ENCODE measurements at regions of chr18 and their contacts with region 1.

Region 1: GRCh38 chr18:36419905-36420531 is 122.5 kb downstream of the FHOD3 start:
- DNase-seq: no peak
- H3K4me3 ChIP-seq: no peak overlapping the region
- H3K27ac ChIP-seq: peak overlapping the region in 1 of 2 donors; percentile 3
- H3K4me1 ChIP-seq: no peaks in the 10 kb centered on the region
- H3K27me3 ChIP-seq: no peaks in the 10 kb centered on the region
- CTCF ChIP-seq: no peak
- POLR2A ChIP-seq: no peak

Region 2: GRCh38 chr18:34483198-34483597 is 1936.8 kb before region 1 on chr18:
- intact Hi-C with region 1: no loop called
- DNase-seq: no peak
- H3K4me3 ChIP-seq: no peak overlapping the region
- H3K27ac ChIP-seq: no peak overlapping the region
- H3K4me1 ChIP-seq: no peaks in the 10 kb centered on the region
- H3K27me3 ChIP-seq: no peaks in the 10 kb centered on the region
- CTCF ChIP-seq: no peak
- POLR2A ChIP-seq: no peak

Region 3: GRCh38 chr18:35174093-35174731 is 1245.8 kb before region 1 on chr18:
- intact Hi-C with region 1: loop called (anchors 10 kb)
- DNase-seq: no peak
- H3K4me3 ChIP-seq: no peak overlapping the region
- H3K27ac ChIP-seq: no peak overlapping the region
- H3K4me1 ChIP-seq: peaks cover 0 to 3% of the 10 kb centered on the region in 2 donors
- H3K27me3 ChIP-seq: no peaks in the 10 kb centered on the region
- CTCF ChIP-seq: no peak
- POLR2A ChIP-seq: no peak